GM10248 (cell line): ENCODE measurements at regions of chr11 and their contacts with region 1.

Region 1: DNA sequence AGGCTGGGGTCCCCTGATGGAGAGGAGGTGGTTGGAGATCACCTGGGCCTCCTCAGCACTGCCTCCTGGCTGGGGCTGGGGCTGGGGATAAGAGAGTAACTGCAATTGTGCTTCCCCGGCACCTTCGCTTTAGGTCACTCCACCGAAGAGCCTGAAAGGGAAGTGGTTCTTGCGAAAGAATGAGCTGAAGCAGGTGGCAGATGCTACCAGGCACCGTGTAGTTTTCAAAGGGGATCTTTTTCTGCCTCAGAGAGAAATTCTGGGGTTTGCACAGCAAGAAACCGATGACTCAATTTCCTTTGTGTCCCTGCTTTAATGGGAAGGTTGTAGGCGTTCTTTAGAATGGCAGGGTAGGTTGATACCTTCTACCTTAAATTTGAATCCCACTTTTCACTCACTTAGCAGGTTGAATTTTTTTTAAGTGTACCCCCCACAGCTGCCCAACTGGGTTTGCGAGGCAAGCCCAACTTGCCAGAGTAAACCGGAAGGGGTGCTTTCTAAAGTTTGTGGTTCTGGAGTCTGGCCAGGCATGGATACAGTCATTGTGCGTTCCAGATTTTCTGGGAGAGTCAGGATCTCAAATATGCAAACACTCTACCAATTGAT is 5.3 kb downstream of the CD44 start:
- DNase-seq: peak; percentile 77
- CTCF ChIP-seq: no peak

Region 2: GRCh38 chr11:35006389-35007128 is 137.7 kb before region 1 on chr11:
- CTCF ChIA-PET with region 1: interaction called, 12 read pairs
- POLR2A ChIA-PET with region 1: no interaction called
- DNase-seq: peak; percentile 74
- CTCF ChIP-seq: no peak

Region 3: DNA sequence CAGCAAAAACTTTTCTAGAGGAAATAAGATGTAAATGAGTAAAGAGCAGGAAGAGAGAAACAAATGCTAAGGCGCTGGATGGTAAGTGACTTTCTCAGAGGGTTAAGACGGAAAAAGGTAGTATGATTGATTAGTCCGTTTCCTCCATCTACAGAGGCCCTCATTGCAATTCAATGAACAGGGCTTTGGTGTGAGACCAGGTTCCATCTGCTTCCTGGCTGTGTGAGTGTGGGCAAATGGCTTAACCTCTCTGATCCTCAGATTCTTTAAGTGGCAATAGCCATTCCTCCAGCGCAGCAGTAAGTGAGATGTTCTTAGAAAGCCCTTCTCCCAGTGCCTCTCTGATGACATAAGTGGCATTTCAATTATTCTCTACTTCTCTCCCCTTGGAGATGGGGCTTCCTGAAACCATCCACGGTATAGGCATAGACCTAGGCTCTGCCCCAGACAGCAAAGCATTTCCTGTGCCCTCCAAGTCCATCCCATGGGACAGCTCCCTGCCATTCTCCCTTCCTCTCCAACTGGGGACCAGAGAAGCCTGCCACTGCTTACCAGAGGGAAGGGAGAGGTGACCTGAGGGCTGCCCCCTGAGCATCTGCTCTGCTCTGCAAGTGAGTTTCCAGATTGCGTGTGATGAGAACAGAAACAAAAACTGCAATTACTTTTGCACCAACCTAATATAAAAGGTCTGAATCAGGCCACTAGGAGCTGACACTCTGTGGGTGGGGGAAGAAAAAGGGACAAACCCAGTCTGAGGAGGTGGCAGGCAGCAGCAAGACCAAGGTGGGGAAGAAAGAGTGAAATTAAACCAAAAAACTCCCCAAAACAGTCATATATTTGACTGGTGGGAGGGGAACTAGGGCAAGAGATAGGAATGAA is 18.0 kb before region 1 on chr11:
- CTCF ChIA-PET with region 1: interaction called, 10 read pairs
- POLR2A ChIA-PET with region 1: interaction called, 3 read pairs
- DNase-seq: peak; percentile 76
- CTCF ChIP-seq: no peak